ENCODE measurements at regions of chr17 and their contacts with region 1.

Region 1: GRCh38 chr17:41665566-41666236 is 23.0 kb upstream of the EIF1 start:
- DNase-seq: peak; percentile 67
- ATAC-seq: peak; percentile 82
- H3K4me3 ChIP-seq: peak overlapping the region; percentile 73
- H3K27ac ChIP-seq: peak overlapping the region; percentile 67
- H3K4me1 ChIP-seq: peaks cover 39% of the 10 kb centered on the region
- H3K27me3 ChIP-seq: no peaks in the 10 kb centered on the region
- CTCF ChIP-seq: peak; percentile 90 to 97 (median 95); a peak in 5 of 6 replicates
- EP300 ChIP-seq: peak in 1 of 2 experiments; percentile 31; a peak in 1 of 4 replicates
- POLR2A ChIP-seq: peak; percentile 66
- RAD21 ChIP-seq: no peak

Region 2: DNA sequence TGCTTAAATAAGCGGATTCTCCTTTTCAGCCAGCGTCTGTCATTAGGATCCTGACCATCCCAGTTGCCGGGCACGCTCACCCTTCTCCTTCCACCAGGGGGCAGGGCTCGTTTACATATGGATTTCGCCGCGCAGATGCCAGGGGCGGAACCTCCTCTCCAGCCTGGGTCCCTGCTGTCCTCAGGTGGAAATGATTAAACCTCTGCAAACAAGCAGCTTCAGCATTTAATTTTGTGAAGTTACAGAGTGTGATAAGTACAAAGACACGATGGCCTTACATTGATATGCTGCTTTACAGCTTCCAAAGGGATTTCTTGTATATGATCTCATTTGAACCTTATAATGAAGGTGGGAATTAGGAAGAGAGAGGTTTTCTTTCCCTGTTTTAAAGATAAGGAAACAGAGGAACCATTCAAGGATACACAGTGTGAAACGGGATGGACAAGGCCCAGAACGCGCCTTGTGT is 862.1 kb before region 1 on chr17:
- CTCF ChIA-PET with region 1: interaction called, 17 read pairs
- POLR2A ChIA-PET with region 1: no interaction called
- RAD21 ChIA-PET with region 1: interaction called, 3 read pairs
- SMC1A ChIA-PET with region 1: interaction called, 3 read pairs
- in situ Hi-C with region 1: loop called (anchors 5 kb)
- intact Hi-C with region 1: loop called (anchors 5 kb)
- DNase-seq: no peak
- ATAC-seq: peak; percentile 97
- H3K4me3 ChIP-seq: no peak overlapping the region
- H3K27ac ChIP-seq: no peak overlapping the region
- H3K4me1 ChIP-seq: no peaks in the 10 kb centered on the region
- H3K27me3 ChIP-seq: peaks cover 7 to 10% of the 10 kb centered on the region in 2 experiments
- CTCF ChIP-seq: peak; percentile 84 to 90 (median 86)
- EP300 ChIP-seq: no peak
- POLR2A ChIP-seq: no peak
- RAD21 ChIP-seq: peak; percentile 91

Region 3: GRCh38 chr17:40857535-40857934 is 808.2 kb before region 1 on chr17:
- CTCF ChIA-PET with region 1: interaction called, 15 read pairs
- POLR2A ChIA-PET with region 1: interaction called, 3 read pairs
- RAD21 ChIA-PET with region 1: interaction called, 10 read pairs
- SMC1A ChIA-PET with region 1: interaction called, 8 read pairs
- in situ Hi-C with region 1: no loop called
- intact Hi-C with region 1: loop called (anchors 5 kb)
- DNase-seq: no peak
- ATAC-seq: no peak
- H3K4me3 ChIP-seq: no peak overlapping the region
- H3K27ac ChIP-seq: no peak overlapping the region
- H3K4me1 ChIP-seq: no peaks in the 10 kb centered on the region
- H3K27me3 ChIP-seq: peaks cover 0 to 4% of the 10 kb centered on the region in 2 experiments; a peak in 3 of 4 replicates
- CTCF ChIP-seq: no peak
- EP300 ChIP-seq: no peak
- POLR2A ChIP-seq: no peak
- RAD21 ChIP-seq: no peak

Region 4: DNA sequence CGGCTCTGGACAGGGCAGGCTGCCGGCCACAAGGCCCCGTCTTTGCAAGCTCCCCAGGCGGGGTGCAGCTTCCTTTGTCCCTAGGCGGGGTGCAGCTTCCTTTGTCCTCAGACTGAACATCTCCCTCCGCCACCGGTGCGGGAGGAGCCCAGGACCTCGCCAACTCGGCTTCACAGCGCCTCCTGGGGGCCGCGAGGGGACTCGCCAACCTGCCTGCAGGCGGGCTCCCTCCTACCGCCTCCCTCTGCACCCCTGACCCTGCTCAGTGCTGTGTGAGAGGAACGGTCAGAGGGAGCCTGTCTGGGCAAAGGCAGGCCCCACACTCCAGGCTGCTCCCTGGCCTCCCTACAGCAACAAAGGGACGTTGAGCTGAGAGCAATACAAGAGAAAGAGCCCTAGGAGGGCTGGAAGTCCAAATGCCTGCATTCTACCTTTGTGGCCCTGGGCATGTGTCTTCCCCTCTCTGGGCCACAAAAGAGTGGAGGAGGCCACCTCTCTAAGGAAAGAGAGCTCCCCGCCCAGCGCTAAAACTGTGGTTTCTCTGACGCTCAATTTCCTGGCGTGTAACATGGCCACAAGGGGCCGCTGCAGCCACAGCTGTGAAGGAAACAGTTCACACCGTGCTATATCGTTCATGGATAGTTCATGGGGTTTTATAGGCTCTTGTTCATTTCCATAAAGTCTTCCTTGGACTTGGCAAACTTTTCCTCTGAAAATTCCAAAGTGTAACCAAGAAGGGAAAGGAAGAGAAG is 116.7 kb before region 1 on chr17:
- CTCF ChIA-PET with region 1: interaction called, 146 read pairs
- POLR2A ChIA-PET with region 1: interaction called, 6 read pairs
- RAD21 ChIA-PET with region 1: interaction called, 26 read pairs
- SMC1A ChIA-PET with region 1: interaction called, 34 read pairs
- in situ Hi-C with region 1: loop called (anchors 5 kb)
- intact Hi-C with region 1: loop called (anchors 1 kb)
- DNase-seq: peak; percentile 12
- ATAC-seq: peak; percentile 95
- H3K4me3 ChIP-seq: no peak overlapping the region
- H3K27ac ChIP-seq: no peak overlapping the region
- H3K4me1 ChIP-seq: no peaks in the 10 kb centered on the region
- H3K27me3 ChIP-seq: no peaks in the 10 kb centered on the region; a peak in 2 of 4 replicates
- CTCF ChIP-seq: peak; percentile 86 to 93 (median 91)
- EP300 ChIP-seq: no peak
- POLR2A ChIP-seq: no peak
- RAD21 ChIP-seq: peak; percentile 73

Region 5: GRCh38 chr17:41593311-41593981 is 72.3 kb before region 1 on chr17:
- CTCF ChIA-PET with region 1: interaction called, 12 read pairs
- POLR2A ChIA-PET with region 1: no interaction called
- RAD21 ChIA-PET with region 1: interaction called, 3 read pairs
- SMC1A ChIA-PET with region 1: no interaction called
- in situ Hi-C with region 1: no loop called
- intact Hi-C with region 1: loop called (anchors 5 kb)
- DNase-seq: no peak
- ATAC-seq: peak; percentile 36; the same call in 2 of the 3 replicates
- H3K4me3 ChIP-seq: no peak overlapping the region
- H3K27ac ChIP-seq: no peak overlapping the region
- H3K4me1 ChIP-seq: no peaks in the 10 kb centered on the region
- H3K27me3 ChIP-seq: peaks cover 0 to 2% of the 10 kb centered on the region in 2 experiments; a peak in 2 of 4 replicates
- CTCF ChIP-seq: no peak
- EP300 ChIP-seq: no peak
- POLR2A ChIP-seq: no peak
- RAD21 ChIP-seq: no peak

Region 6: GRCh38 chr17:41678907-41679739 is 13.4 kb after region 1 on chr17:
- CTCF ChIA-PET with region 1: interaction called, 170 read pairs
- POLR2A ChIA-PET with region 1: interaction called, 103 read pairs
- RAD21 ChIA-PET with region 1: interaction called, 105 read pairs
- SMC1A ChIA-PET with region 1: interaction called, 92 read pairs
- in situ Hi-C with region 1: no loop called
- intact Hi-C with region 1: no loop called
- DNase-seq: peak; percentile 84
- ATAC-seq: peak; percentile 82
- H3K4me3 ChIP-seq: peak overlapping the region; percentile 51
- H3K27ac ChIP-seq: peak overlapping the region; percentile 88
- H3K4me1 ChIP-seq: peaks cover 7% of the 10 kb centered on the region
- H3K27me3 ChIP-seq: no peaks in the 10 kb centered on the region
- CTCF ChIP-seq: peak; percentile 29 to 63 (median 33); a peak in 4 of 6 replicates
- EP300 ChIP-seq: no peak
- POLR2A ChIP-seq: no peak
- RAD21 ChIP-seq: peak; percentile 51; the same call in 1 of the 2 replicates

Region 7: GRCh38 chr17:41695954-41696756 is 30.5 kb after region 1 on chr17:
- CTCF ChIA-PET with region 1: interaction called, 192 read pairs
- POLR2A ChIA-PET with region 1: interaction called, 86 read pairs
- RAD21 ChIA-PET with region 1: interaction called, 117 read pairs
- SMC1A ChIA-PET with region 1: interaction called, 76 read pairs
- in situ Hi-C with region 1: no loop called
- intact Hi-C with region 1: no loop called
- DNase-seq: no peak
- ATAC-seq: peak; percentile 66
- H3K4me3 ChIP-seq: no peak overlapping the region
- H3K27ac ChIP-seq: no peak overlapping the region
- H3K4me1 ChIP-seq: peaks cover 2% of the 10 kb centered on the region; the same call in 1 of the 2 replicates
- H3K27me3 ChIP-seq: no peaks in the 10 kb centered on the region
- CTCF ChIP-seq: peak; percentile 73 to 91 (median 76)
- EP300 ChIP-seq: no peak
- POLR2A ChIP-seq: no peak
- RAD21 ChIP-seq: peak; percentile 59

Region 8: DNA sequence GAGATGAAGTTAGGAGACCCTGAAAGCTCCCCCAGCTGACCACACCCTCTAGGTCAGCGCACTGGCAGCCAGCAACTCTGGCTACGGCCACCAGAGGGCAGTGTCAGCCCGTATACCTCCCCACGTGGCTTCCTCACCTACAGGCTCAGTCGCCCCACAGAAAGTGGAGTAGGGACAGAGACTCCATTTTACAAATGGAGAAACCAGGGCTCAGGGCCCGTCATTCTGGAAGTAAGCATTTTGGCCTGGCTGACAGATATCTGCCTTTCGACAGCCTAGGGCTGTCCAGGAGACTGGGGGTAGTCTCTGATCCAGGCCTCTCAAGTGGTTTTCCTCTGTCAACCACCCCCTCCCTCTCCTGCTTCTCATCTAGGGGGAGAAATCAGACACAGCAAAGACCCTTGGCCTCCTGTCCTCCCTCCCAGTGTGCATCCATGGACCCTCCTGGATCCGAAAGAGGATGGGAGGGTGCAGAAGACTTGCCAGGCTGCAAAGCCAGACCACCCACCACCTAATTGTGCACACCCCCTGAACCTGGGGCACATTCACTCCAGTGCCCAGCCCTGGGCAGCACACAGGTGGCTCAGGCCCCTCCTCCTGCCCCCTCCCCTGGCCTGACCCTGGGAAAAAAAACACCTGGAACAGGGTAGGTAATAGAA is 72.5 kb after region 1 on chr17:
- CTCF ChIA-PET with region 1: no interaction called
- POLR2A ChIA-PET with region 1: no interaction called
- RAD21 ChIA-PET with region 1: no interaction called
- SMC1A ChIA-PET with region 1: no interaction called
- in situ Hi-C with region 1: no loop called
- intact Hi-C with region 1: no loop called
- DNase-seq: peak; percentile 44
- ATAC-seq: peak; percentile 99
- H3K4me3 ChIP-seq: no peak overlapping the region
- H3K27ac ChIP-seq: no peak overlapping the region
- H3K4me1 ChIP-seq: peaks cover 3% of the 10 kb centered on the region; the same call in 1 of the 2 replicates
- H3K27me3 ChIP-seq: peaks cover 8% of the 10 kb centered on the region in 2 experiments; a peak in 3 of 4 replicates
- CTCF ChIP-seq: peak; percentile 97 to 98 (median 97); a peak in 5 of 6 replicates
- EP300 ChIP-seq: no peak
- POLR2A ChIP-seq: no peak
- RAD21 ChIP-seq: peak; percentile 97